Panc1 (cell line): ENCODE measurements at regions of chr4 and their contacts with region 1.

Region 1: GRCh38 chr4:21952549-21952948 is 4.0 kb upstream of the KCNIP4 start:
- DNase-seq: no peak
- ATAC-seq: no peak
- H3K4me3 ChIP-seq: no peak overlapping the region
- H3K27ac ChIP-seq: no peak overlapping the region
- H3K4me1 ChIP-seq: no peaks in the 10 kb centered on the region
- H3K27me3 ChIP-seq: no peaks in the 10 kb centered on the region
- CTCF ChIP-seq: no peak

Region 2: DNA sequence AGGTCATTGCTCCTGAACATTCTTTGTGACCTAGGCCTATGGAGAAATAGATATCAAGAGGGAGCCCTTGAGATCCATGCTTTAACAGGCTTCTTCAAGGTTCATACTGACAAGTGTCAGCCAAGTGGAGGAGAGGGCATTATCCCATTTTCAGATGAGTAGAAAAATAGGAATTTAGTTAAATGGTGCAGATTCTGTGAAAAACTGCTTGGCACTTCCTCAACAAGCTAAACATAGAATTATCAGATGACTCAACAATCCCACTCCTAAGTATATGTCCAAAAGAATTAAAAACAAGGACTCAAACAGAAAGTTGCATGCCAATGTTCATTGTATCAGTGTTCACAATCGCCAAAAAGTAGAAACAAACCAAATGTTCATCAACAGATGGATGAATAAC is 39.8 kb after region 1 on chr4:
- CTCF ChIA-PET with region 1: no interaction called
- POLR2A ChIA-PET with region 1: no interaction called
- in situ Hi-C with region 1: no loop called
- intact Hi-C with region 1: no loop called
- DNase-seq: no peak
- ATAC-seq: no peak
- H3K4me3 ChIP-seq: no peak overlapping the region
- H3K27ac ChIP-seq: no peak overlapping the region
- H3K4me1 ChIP-seq: no peaks in the 10 kb centered on the region
- H3K27me3 ChIP-seq: no peaks in the 10 kb centered on the region
- CTCF ChIP-seq: no peak

Region 3: DNA sequence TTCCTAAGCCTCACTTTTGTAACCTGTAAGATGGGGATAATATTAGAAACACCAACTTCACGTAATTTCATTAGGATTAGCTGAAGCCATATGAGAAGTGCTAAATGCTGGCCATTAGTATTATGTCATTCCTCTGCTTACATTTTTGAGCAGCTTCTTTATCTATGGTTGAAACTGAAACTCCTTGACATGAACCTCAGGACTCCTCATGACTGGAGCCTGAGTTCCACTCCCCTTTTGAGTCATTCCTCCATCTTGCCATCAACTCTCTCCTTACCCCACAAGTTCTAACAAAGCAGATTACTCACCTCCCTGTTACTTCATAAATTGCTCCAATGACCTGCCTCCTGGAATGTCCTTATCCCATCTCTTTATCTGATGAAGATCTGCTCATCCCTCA is 119.2 kb after region 1 on chr4:
- CTCF ChIA-PET with region 1: no interaction called
- POLR2A ChIA-PET with region 1: no interaction called
- in situ Hi-C with region 1: no loop called
- intact Hi-C with region 1: no loop called
- DNase-seq: no peak
- ATAC-seq: no peak
- H3K4me3 ChIP-seq: no peak overlapping the region
- H3K27ac ChIP-seq: no peak overlapping the region
- H3K4me1 ChIP-seq: no peaks in the 10 kb centered on the region
- H3K27me3 ChIP-seq: no peaks in the 10 kb centered on the region
- CTCF ChIP-seq: no peak

Region 4: GRCh38 chr4:22099896-22100295 is 147.3 kb after region 1 on chr4:
- CTCF ChIA-PET with region 1: no interaction called
- POLR2A ChIA-PET with region 1: no interaction called
- in situ Hi-C with region 1: no loop called
- intact Hi-C with region 1: loop called (anchors 10 kb)
- DNase-seq: no peak
- ATAC-seq: no peak
- H3K4me3 ChIP-seq: no peak overlapping the region
- H3K27ac ChIP-seq: no peak overlapping the region
- H3K4me1 ChIP-seq: no peaks in the 10 kb centered on the region
- H3K27me3 ChIP-seq: no peaks in the 10 kb centered on the region
- CTCF ChIP-seq: no peak

Region 5: DNA sequence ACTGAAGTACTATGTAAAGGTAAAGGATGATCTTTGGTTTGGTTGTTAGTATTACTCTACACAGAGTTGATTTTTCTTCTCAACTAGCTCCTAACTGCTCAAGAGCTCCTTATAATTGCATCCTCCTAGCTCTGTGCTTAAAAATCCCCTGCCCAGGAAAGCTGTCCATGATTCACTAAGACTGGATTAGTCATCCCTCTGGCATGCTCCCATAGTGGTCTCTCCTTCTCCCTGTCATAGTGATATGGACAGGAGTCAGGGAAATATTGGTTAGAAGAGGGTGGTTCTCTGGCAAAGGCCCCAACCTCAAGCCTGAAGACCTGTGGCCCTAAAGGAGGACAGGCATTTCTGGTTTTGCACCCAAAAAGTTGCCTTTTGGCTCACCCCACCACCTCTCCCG is 238.3 kb after region 1 on chr4:
- CTCF ChIA-PET with region 1: no interaction called
- POLR2A ChIA-PET with region 1: no interaction called
- in situ Hi-C with region 1: no loop called
- intact Hi-C with region 1: no loop called
- DNase-seq: no peak
- ATAC-seq: no peak
- H3K4me3 ChIP-seq: no peak overlapping the region
- H3K27ac ChIP-seq: no peak overlapping the region
- H3K4me1 ChIP-seq: no peaks in the 10 kb centered on the region
- H3K27me3 ChIP-seq: no peaks in the 10 kb centered on the region
- CTCF ChIP-seq: no peak